ENCODE measurements at regions of chr12 and their contacts with region 1.

Region 1: GRCh38 chr12:48988030-48988649 is 10.0 kb downstream of the WNT1 start:
- DNase-seq: peak in 28 of 35 experiments; percentile 30 to 85 (median 64)
- ATAC-seq: peak; percentile 75 to 84 (median 81)
- H3K4me3 ChIP-seq: no peak overlapping the region
- H3K4me3 Mint-ChIP-seq: no peak overlapping the region
- H3K27ac ChIP-seq: no peak overlapping the region
- H3K27ac Mint-ChIP-seq: peak overlapping the region in 1 of 2 donors; percentile 12
- H3K4me1 ChIP-seq: peaks cover 0 to 5% of the 10 kb centered on the region in 2 experiments
- H3K4me1 Mint-ChIP-seq: peaks cover 7 to 12% (median 7%) of the 10 kb centered on the region in 3 donors
- H3K27me3 ChIP-seq: peaks cover 13 to 43% of the 10 kb centered on the region in 2 experiments
- H3K27me3 Mint-ChIP-seq: peaks cover 26 to 33% of the 10 kb centered on the region in 2 donors

Region 2: DNA sequence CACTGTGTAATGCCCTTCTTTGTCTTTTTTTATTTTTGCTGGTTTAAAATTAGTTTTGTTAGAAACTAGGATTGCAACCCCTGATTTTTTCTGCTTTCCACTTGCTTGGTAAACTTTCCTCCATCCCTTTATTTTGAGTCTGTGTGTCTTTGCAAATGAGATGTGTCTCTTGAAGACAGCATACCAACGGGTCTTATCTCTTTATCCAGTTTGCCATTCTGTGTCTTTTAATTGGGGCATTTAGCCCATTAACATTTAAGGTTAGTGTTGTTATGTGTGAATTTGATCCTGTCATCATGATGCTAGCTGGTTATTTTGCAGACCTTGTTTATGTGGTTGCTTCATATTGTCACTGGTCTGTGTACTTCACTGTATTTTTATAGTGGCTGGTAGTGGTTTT is 374.8 kb before region 1 on chr12:
- CTCF ChIA-PET with region 1: no interaction called
- POLR2A ChIA-PET with region 1: no interaction called
- DNase-seq: no peak
- ATAC-seq: no peak
- H3K4me3 ChIP-seq: no peak overlapping the region
- H3K4me3 Mint-ChIP-seq: no peak overlapping the region
- H3K27ac ChIP-seq: no peak overlapping the region
- H3K27ac Mint-ChIP-seq: no peak overlapping the region
- H3K4me1 ChIP-seq: no peaks in the 10 kb centered on the region
- H3K4me1 Mint-ChIP-seq: peaks cover 0 to 2% (median 0%) of the 10 kb centered on the region in 3 donors
- H3K27me3 ChIP-seq: peaks cover 0 to 20% of the 10 kb centered on the region in 2 experiments
- H3K27me3 Mint-ChIP-seq: peaks cover 35 to 47% of the 10 kb centered on the region in 2 donors

Region 3: GRCh38 chr12:48977315-48978281 is 10.5 kb before region 1 on chr12:
- CTCF ChIA-PET with region 1: interaction called, 7 to 33 read pairs
- POLR2A ChIA-PET with region 1: no interaction called
- DNase-seq: peak in 34 of 35 experiments; percentile 60 to 91 (median 79)
- ATAC-seq: peak; percentile 36 to 61 (median 50)
- H3K4me3 ChIP-seq: no peak overlapping the region
- H3K4me3 Mint-ChIP-seq: peak overlapping the region; percentile 34 to 86 (median 41)
- H3K27ac ChIP-seq: no peak overlapping the region
- H3K27ac Mint-ChIP-seq: peak overlapping the region in 1 of 2 donors; percentile 39
- H3K4me1 ChIP-seq: peaks cover 20 to 63% of the 10 kb centered on the region in 2 experiments
- H3K4me1 Mint-ChIP-seq: peaks cover 44 to 54% (median 54%) of the 10 kb centered on the region in 3 donors
- H3K27me3 ChIP-seq: peaks cover 10 to 60% of the 10 kb centered on the region in 2 experiments
- H3K27me3 Mint-ChIP-seq: peaks cover 26 to 33% of the 10 kb centered on the region in 2 donors